IMR-90 (cell line): ENCODE measurements at regions of chr13 and their contacts with region 1.

Region 1: GRCh38 chr13:50801087-50801931 is 42.2 kb downstream of the DLEU7 start:
- DNase-seq: peak; percentile 72
- ATAC-seq: peak; percentile 97
- H3K4me3 ChIP-seq: no peak overlapping the region
- H3K27ac ChIP-seq: no peak overlapping the region
- H3K4me1 ChIP-seq: peaks cover 1% of the 10 kb centered on the region; the same call in 1 of the 2 replicates
- H3K27me3 ChIP-seq: peaks cover 18% of the 10 kb centered on the region
- CTCF ChIP-seq: peak; percentile 82
- POLR2A ChIP-seq: no peak
- RAD21 ChIP-seq: peak; percentile 90

Region 2: GRCh38 chr13:49858183-49858856 is 943.0 kb before region 1 on chr13:
- CTCF ChIA-PET with region 1: no interaction called
- POLR2A ChIA-PET with region 1: no interaction called
- dilution Hi-C with region 1: no loop called
- in situ Hi-C with region 1: no loop called
- intact Hi-C with region 1: loop called (anchors 10 kb)
- DNase-seq: peak; percentile 99
- ATAC-seq: peak; percentile 92
- H3K4me3 ChIP-seq: no peak overlapping the region
- H3K27ac ChIP-seq: peak overlapping the region; percentile 92
- H3K4me1 ChIP-seq: peaks cover 6% of the 10 kb centered on the region
- H3K27me3 ChIP-seq: no peaks in the 10 kb centered on the region
- CTCF ChIP-seq: no peak
- POLR2A ChIP-seq: no peak
- RAD21 ChIP-seq: no peak; the same call in 1 of the 2 replicates

Region 3: DNA sequence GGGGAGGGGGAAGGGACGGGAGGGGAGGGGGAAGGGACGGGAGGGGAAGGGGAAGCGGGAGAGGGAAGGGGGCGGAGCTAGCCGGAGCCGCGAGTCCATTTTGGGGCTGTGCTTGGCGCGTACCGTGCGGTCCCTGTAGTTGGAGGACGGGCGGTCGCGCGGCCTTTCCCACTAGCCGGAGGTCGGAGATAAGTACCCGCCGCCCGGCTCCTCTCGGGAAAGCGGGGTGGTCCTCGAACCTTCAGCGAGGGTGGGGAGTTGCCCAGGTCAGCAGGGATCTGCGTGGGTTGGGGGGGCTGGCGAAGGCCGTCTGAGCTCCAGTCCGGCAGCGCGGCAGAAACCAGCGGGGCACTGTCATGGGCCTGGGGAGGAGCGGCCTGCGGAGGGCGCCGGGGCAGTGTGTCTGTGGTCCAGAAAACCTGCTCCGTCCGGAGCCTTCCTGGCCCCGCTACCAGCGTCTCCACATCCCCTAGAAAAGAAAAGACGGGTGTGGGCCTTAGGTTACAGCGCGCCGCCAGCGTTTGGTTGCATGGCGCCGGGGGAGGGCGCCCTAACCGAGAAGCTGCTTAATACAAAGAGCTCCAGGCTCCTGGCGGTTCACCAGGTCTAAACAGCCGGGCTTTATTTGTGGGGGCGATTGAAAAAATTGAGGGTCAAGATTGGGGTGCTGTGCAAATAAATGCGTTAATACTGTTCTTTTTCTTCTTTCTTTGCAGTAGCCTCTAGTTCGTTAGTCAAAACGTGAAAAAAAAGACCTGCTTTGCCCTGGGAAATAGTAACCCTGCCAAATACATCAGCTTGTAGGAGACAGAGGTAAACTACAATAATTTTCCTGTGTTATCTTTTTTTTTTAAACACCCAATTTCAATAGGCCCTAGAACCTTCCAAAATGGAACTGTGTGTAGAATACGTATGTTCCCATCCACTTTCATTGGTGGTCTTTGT is 804.1 kb before region 1 on chr13 and contains the start of gene TRIM13:
- CTCF ChIA-PET with region 1: interaction called, 4 read pairs
- POLR2A ChIA-PET with region 1: no interaction called
- dilution Hi-C with region 1: no loop called
- in situ Hi-C with region 1: no loop called
- intact Hi-C with region 1: loop called (anchors 5 kb)
- DNase-seq: peak; percentile 88
- ATAC-seq: peak; percentile 87
- H3K4me3 ChIP-seq: peak within 1 kb of the TSS; percentile 87
- H3K27ac ChIP-seq: peak within 1 kb of the TSS; percentile 98
- H3K4me1 ChIP-seq: peaks cover 4% of the 10 kb centered on the region
- H3K27me3 ChIP-seq: no peaks in the 10 kb centered on the region
- CTCF ChIP-seq: peak; percentile 82
- POLR2A ChIP-seq: peak; percentile 87
- RAD21 ChIP-seq: peak; percentile 68
- total RNA-seq, gene TRIM13: 20.1 and 22.5 TPM in 2 replicates

Region 4: DNA sequence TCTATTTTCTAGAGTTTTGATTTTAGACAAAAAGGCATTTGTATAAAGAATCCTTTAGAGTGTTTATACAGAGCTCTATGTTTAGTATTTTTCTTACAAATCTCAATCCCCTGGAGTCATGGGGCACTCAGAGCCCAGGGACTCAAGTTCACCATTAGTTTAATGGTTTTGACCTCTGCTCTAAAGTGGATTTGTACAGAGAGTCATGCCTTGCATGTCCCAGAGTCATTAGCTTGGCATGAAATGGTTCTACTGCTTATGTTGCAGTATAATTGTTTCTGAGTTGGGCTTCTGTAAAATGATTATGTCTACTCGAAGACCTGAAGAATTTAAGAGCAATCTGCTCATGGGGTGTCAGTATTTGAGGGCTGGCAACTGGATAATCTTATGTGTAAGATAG is 364.1 kb before region 1 on chr13:
- CTCF ChIA-PET with region 1: no interaction called
- POLR2A ChIA-PET with region 1: no interaction called
- dilution Hi-C with region 1: no loop called
- in situ Hi-C with region 1: no loop called
- intact Hi-C with region 1: loop called (anchors 10 kb)
- DNase-seq: peak; percentile 87
- ATAC-seq: peak; percentile 98
- H3K4me3 ChIP-seq: no peak overlapping the region
- H3K27ac ChIP-seq: no peak overlapping the region; the same call in 1 of the 2 replicates
- H3K4me1 ChIP-seq: peaks cover 5% of the 10 kb centered on the region
- H3K27me3 ChIP-seq: no peaks in the 10 kb centered on the region
- CTCF ChIP-seq: no peak
- POLR2A ChIP-seq: no peak
- RAD21 ChIP-seq: no peak

Region 5: GRCh38 chr13:50708461-50708860 is 92.8 kb before region 1 on chr13:
- CTCF ChIA-PET with region 1: no interaction called
- POLR2A ChIA-PET with region 1: no interaction called
- dilution Hi-C with region 1: no loop called
- in situ Hi-C with region 1: no loop called
- intact Hi-C with region 1: no loop called
- DNase-seq: no peak
- ATAC-seq: no peak
- H3K4me3 ChIP-seq: no peak overlapping the region
- H3K27ac ChIP-seq: no peak overlapping the region
- H3K4me1 ChIP-seq: no peaks in the 10 kb centered on the region
- H3K27me3 ChIP-seq: peaks cover 11% of the 10 kb centered on the region
- CTCF ChIP-seq: no peak
- POLR2A ChIP-seq: no peak
- RAD21 ChIP-seq: no peak

Region 6: DNA sequence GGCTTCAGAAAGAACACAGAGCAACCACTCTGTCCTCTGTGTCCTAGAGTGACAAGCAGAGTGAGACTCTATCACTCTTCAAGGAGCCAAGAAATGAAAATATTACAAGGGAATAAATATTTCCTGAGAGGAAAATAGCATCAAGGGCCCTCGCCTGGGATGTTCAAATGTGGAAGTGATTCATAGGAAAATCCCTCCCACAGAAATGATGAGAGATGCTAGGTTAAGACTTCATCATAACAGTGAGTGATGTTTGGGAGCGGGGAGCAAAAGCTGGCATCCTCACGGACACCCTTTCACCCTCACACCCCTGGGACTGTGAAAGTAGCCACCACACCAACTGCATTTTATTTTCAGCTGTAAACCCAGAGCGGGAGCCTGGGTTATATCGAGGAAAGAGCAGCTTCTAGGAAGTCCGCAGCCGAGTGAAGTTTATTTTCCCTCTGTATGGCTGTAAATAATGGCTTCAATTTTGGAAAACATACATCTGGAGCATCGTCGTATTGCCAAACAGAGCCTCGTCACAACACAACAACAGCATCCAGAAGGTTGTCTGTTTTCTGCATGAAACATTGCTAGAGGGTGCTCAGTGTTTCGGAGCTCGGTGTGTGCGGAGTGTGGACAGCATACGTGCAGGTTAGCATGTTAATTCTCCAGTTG is 12.6 kb before region 1 on chr13:
- CTCF ChIA-PET with region 1: no interaction called
- POLR2A ChIA-PET with region 1: no interaction called
- dilution Hi-C with region 1: no loop called
- in situ Hi-C with region 1: no loop called
- intact Hi-C with region 1: no loop called
- DNase-seq: peak; percentile 2
- ATAC-seq: no peak; the same call in 1 of the 2 replicates
- H3K4me3 ChIP-seq: no peak overlapping the region
- H3K27ac ChIP-seq: no peak overlapping the region
- H3K4me1 ChIP-seq: no peaks in the 10 kb centered on the region
- H3K27me3 ChIP-seq: peaks cover 39% of the 10 kb centered on the region
- CTCF ChIP-seq: no peak
- POLR2A ChIP-seq: no peak
- RAD21 ChIP-seq: no peak

Region 7: DNA sequence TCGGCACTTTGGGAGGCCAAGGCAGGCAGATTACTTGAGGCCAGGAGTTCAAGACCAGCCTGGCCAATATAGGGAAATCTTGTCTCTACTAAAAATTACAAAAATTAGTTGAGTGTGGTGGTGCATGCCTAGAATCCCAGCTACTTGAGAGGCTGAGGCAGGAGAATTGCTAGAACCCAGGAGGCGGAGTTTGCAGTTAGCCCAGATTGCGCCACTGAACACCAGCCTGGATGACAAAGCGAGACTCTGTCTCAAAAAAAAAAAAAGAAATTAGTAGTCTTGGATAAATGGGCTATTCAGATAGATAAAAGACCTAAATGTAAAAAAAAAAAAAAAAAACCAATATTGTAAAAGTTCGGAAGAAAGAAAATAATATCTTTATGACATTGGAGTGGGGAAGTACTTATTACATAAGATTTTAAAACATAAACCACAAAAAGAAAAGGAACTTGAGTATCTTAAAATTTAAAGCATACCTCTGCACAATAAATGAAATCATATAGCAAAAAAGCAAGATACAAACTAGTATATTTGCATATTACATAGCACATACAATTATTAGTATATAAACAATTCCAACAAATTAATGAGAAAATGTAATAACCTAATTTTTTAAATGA is 81.6 kb after region 1 on chr13:
- CTCF ChIA-PET with region 1: no interaction called
- POLR2A ChIA-PET with region 1: no interaction called
- dilution Hi-C with region 1: no loop called
- in situ Hi-C with region 1: no loop called
- intact Hi-C with region 1: no loop called
- DNase-seq: no peak
- ATAC-seq: no peak
- H3K4me3 ChIP-seq: no peak overlapping the region
- H3K27ac ChIP-seq: no peak overlapping the region
- H3K4me1 ChIP-seq: no peaks in the 10 kb centered on the region
- H3K27me3 ChIP-seq: peaks cover 8% of the 10 kb centered on the region
- CTCF ChIP-seq: no peak
- POLR2A ChIP-seq: no peak
- RAD21 ChIP-seq: no peak